Posterior vena cava (tissue), 2 donors: ENCODE measurements at regions of chr19 and their contacts with region 1.

Region 1: DNA sequence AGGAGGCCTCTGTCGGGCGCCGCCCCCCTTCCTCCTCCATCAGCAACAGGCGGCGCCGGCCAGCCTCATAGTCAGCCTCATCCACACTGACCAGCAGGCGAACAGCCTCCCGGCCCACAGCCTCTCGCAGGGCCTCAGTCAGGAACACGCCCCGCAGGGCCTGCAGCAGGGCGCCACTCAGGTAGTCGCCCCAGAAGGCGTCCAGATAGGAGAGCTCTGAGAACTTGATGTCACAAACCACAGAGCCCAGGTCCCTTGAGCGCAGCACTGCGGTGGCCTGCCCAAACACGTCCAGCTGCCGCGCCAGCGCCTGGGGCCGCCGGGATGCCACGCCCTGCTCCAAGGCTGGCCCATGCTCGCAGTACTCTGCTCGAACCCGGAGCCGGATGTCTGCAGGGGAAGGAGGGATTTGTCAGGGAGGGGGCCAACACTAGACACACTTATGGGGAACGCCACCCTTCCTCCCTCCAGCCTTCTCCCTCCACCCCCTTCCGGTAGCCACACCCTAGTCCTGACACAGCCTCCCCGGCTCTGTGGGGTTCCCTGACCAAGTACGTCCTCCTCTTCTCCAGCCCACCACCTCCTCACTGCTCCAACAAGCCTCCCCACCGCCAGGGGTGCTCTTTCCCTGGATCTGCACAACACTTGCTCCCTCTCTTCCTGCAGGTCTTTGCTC is 17.9 kb downstream of the DEDD2 start:
- DNase-seq: peak; percentile 85

Region 2: DNA sequence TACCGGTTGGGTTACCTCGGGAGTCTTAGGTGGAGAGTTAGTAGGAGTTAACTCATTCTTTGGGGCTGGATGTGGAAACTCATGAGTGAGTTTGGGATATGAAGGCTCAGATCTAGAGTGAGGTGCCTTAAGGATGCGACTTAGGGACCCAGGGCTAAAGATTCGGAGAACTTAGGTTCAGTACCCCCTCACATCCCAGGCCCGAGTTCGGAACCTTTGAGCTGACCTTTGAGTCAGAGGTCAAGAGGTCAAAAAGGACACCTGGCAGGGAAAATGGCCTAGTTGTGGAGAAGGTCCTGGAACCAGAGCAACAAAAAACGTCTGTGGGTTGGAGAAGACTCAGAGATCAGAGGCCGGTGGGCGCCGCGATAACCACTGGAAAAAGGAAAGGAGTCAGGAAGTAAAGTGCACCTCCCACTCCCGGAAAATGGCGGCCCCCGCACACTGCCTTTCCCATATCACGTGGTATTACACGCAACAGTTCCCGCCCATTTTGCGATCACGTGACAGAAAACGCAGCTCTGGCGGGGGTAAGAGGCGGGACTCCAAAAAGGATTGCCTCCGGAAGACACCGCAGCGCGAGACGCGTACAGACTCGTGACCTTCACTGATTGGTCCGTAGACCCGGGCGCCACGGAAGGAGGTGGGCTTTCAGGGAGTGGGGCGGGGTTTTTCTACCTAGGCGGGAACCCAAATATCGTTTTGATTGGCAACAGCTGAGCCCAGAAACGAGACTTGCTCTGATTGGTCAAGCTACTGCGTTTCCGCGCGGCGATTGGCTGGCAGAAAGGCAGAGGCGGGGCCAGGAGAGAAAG is 1449.3 kb before region 1 on chr19 and contains the start of gene ACTMAP:
- intact Hi-C with region 1: no loop called
- DNase-seq: peak; percentile 100
- total RNA-seq, gene ACTMAP: 3.0 to 5.5 TPM

Region 3: DNA sequence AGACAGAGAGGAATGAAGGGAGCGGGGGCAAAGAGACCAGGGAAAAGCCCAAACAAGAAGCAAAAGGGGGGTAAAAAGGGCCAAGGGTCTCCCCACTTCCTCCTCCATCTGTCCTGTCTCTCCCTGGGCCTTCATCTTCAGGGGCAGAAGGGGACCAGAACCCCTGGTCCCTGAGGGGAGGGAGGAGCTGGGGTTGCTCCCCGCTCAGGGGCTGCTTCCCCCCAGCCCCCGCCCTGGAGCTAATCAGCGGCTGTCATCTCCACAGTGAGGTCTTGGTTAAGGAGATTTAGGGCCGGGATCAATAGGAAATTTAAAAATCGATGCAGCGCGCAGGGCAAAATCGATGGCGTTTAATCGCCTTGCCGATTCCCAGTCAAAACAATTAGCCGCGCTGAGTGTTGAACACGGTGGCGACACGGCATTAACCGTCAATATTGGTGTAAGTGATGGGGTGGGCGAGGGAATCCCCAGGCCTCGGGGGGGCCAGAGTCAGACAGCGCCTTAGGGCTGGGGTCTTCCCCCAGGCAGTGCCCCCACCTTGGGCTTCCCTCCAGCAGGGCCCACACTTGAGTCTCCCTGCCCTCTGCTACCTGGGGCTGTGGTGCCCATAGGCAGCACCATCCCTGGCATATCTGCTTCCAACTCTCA is 37.8 kb before region 1 on chr19:
- intact Hi-C with region 1: loop called in 1 of 2 experiments (anchors 1 kb)
- DNase-seq: no peak